SK-N-SH (cell line): ENCODE measurements at regions of chr17 and their contacts with region 1.

Region 1: GRCh38 chr17:8745586-8746500 is 1.2 kb upstream of the CCDC42 start:
- DNase-seq: peak; percentile 97
- H3K4me3 ChIP-seq: peak overlapping the region; percentile 52 to 70
- H3K27ac ChIP-seq: no peak overlapping the region
- H3K4me1 ChIP-seq: peaks cover 0 to 6% of the 10 kb centered on the region in 2 experiments; a peak in 1 of 4 replicates
- H3K27me3 ChIP-seq: peaks cover 6% of the 10 kb centered on the region; the same call in 1 of the 2 replicates
- CTCF ChIP-seq: peak; percentile 71
- EP300 ChIP-seq: no peak
- RAD21 ChIP-seq: peak; percentile 82

Region 2: DNA sequence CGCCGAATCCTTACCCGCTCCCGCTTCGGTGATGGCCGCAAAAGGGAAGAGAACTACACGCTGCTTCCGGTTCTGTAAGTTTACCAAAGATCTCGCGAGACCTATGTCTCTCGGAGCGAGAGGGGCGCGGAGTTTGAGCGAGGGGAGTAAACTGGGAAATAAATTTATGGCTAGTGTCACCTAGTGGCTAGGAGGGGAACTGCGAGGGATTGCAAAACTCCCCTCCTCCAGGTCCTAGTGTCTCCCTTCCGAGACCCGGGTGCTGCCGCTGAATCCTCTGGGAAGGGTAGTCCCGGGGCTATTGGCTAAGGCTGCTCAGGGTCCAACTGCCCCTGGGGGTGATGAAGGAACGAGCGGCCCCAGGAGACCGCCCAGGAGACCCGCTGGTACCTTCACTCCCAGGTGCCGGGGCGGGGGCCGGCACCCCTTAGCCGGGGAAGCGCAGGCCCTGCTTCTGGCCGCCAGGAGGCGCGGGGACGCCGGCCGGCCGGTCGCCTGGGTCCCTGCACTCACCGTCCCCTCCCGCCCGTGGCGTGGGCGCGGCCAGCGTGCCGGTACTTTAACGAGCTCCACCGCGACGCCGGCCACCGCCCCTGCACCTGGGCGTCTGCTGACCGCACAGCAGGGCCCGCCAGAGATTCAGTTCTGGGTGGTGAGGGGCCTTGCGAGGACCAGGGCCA is 362.6 kb before region 1 on chr17 and contains the start of gene RPL26:
- CTCF ChIA-PET with region 1: interaction called, 19 read pairs
- POLR2A ChIA-PET with region 1: no interaction called
- DNase-seq: peak; percentile 94
- H3K4me3 ChIP-seq: peak within 1 kb of the TSS; percentile 73 to 87
- H3K27ac ChIP-seq: peak within 1 kb of the TSS; percentile 77 to 90
- H3K4me1 ChIP-seq: peaks cover 21 to 28% of the 10 kb centered on the region in 2 experiments; a peak in 3 of 4 replicates
- H3K27me3 ChIP-seq: no peaks in the 10 kb centered on the region
- CTCF ChIP-seq: peak; percentile 98
- EP300 ChIP-seq: peak in 1 of 2 experiments; percentile 8; a peak in 1 of 4 replicates
- RAD21 ChIP-seq: peak; percentile 40; the same call in 1 of the 2 replicates
- polyA plus RNA-seq, gene RPL26: 4,770 and 5,684 TPM in 2 replicates

Region 3: GRCh38 chr17:8420041-8420934 is 325.6 kb before region 1 on chr17:
- CTCF ChIA-PET with region 1: interaction called, 14 read pairs
- POLR2A ChIA-PET with region 1: no interaction called
- DNase-seq: peak; percentile 72
- H3K4me3 ChIP-seq: no peak overlapping the region
- H3K27ac ChIP-seq: peak overlapping the region in 1 of 2 experiments; percentile 18; a peak in 1 of 4 replicates
- H3K4me1 ChIP-seq: peaks cover 0 to 3% of the 10 kb centered on the region in 2 experiments; a peak in 1 of 4 replicates
- H3K27me3 ChIP-seq: peaks cover 14% of the 10 kb centered on the region; the same call in 1 of the 2 replicates
- CTCF ChIP-seq: no peak
- EP300 ChIP-seq: peak in 1 of 2 experiments; percentile 22; a peak in 1 of 4 replicates
- RAD21 ChIP-seq: no peak

Region 4: DNA sequence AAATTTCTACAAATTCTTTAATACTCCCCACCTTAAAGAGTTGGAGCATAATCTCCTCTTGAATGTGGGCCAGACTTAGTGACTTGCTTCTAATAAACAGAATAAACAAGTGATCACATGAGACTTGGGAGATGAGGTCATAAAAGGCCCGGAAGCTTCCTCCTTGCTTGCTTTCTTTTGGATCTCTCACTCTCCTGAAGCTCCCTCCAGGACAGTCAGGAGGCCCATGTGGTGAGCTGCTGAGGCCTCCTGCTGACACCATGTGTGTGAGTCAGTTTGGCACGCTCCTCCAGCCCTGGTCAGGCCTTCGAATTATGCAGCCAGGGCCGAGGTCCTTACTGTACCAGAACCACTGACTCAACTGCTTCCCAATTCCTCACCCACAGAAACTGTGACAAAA is 256.9 kb before region 1 on chr17:
- CTCF ChIA-PET with region 1: interaction called, 13 read pairs
- POLR2A ChIA-PET with region 1: no interaction called
- DNase-seq: no peak
- H3K4me3 ChIP-seq: no peak overlapping the region
- H3K27ac ChIP-seq: peak overlapping the region in 1 of 2 experiments; percentile 26; a peak in 2 of 4 replicates
- H3K4me1 ChIP-seq: no peaks in the 10 kb centered on the region
- H3K27me3 ChIP-seq: no peaks in the 10 kb centered on the region
- CTCF ChIP-seq: no peak
- EP300 ChIP-seq: no peak
- RAD21 ChIP-seq: no peak

Region 5: GRCh38 chr17:8708025-8708461 is 37.8 kb before region 1 on chr17:
- CTCF ChIA-PET with region 1: interaction called, 15 read pairs
- POLR2A ChIA-PET with region 1: interaction called, 3 read pairs
- DNase-seq: peak; percentile 44
- H3K4me3 ChIP-seq: no peak overlapping the region
- H3K27ac ChIP-seq: no peak overlapping the region
- H3K4me1 ChIP-seq: peaks cover 0 to 5% of the 10 kb centered on the region in 2 experiments; a peak in 1 of 4 replicates
- H3K27me3 ChIP-seq: no peaks in the 10 kb centered on the region; the same call in 1 of the 2 replicates
- CTCF ChIP-seq: no peak
- EP300 ChIP-seq: no peak
- RAD21 ChIP-seq: no peak

Region 6: GRCh38 chr17:8785547-8786413 is 39.9 kb after region 1 on chr17:
- CTCF ChIA-PET with region 1: interaction called, 11 read pairs
- POLR2A ChIA-PET with region 1: no interaction called
- DNase-seq: peak; percentile 80
- H3K4me3 ChIP-seq: peak overlapping the region in 1 of 2 experiments; percentile 16; a peak in 1 of 4 replicates
- H3K27ac ChIP-seq: no peak overlapping the region
- H3K4me1 ChIP-seq: peaks cover 0 to 2% of the 10 kb centered on the region in 2 experiments; a peak in 1 of 4 replicates
- H3K27me3 ChIP-seq: peaks cover 17% of the 10 kb centered on the region; the same call in 1 of the 2 replicates
- CTCF ChIP-seq: peak; percentile 84
- EP300 ChIP-seq: no peak
- RAD21 ChIP-seq: peak; percentile 90